ENCODE measurements at regions of chr15 and their contacts with region 1.

Region 1: DNA sequence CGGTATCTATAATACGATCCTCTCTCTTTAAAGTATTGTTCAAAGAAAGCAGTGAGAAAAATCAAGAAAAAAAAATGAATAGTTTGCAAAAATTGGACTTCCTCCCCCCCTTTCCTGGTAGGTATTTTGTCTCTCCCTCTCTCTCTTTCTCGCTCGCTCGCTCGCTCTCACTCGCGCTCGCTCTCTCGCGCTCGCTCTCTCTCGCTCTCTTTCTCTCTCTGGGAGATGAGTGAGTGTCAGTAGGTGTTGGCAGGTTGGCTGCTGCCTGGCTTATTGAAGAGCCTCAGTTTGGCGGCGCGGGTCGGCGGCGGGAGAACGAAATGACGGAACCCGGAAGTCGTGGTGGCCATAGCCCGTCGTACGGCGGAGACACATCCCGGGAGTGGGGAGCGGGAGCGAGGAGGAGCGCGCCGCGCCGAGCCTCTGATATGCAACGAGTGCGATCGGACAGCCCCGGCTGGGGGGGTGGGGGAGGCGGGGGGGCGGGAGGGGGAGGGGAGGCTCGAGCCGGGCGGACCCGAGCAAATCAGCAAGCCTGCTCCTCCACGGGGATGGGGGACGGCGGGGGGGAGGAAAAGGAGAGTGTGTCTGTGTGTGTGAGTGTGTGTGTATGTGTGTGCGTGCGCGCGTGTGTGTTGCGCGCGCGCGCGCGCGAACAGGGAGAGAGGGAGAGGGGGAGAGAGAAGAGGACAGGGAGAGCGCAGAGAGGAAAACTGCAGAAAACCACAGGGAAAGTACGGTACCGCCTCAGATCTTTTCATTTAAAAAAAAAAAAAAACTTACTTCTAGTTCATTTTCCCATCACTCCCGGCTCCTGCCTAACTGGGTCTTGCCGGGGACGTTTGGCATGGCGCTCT is at the start of gene MEIS2:
- DNase-seq: peak; percentile 83 to 95
- H3K4me3 ChIP-seq: peak within 1 kb of the TSS; percentile 80
- H3K4me1 ChIP-seq: peaks cover 12% of the 10 kb centered on the region
- H3K27me3 ChIP-seq: no peaks in the 10 kb centered on the region

Region 2: DNA sequence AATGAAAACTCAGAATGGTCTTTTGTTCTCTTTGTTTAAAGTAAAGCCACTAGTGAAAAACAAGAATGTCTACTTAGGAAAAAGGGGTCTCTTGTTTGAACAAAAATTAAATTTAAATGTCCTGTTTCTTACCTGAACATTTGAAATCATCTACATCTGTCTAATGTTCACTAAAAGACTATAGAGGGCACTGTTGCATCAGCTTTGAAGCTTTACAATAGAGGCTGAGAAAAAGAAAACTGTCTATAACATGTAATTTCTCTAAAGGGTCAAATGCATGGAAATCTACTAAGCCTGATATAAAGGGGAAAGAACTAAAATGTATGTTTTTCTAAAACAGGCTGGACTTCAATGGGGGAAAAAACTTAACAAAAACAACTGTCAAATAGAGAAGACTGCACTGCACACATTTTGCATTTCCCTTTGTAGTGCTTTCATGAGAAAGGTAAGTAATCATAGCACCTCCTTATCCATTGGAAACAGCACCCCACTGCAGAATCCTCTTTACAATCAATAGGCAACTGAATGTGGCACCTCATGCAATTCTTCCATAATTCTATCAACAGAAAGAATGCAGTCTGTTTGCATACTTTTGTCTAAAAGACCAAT is 1580.7 kb before region 1 on chr15:
- in situ Hi-C with region 1: loop called (anchors 25 kb)
- DNase-seq: peak; percentile 11 to 82
- H3K4me3 ChIP-seq: no peak overlapping the region
- H3K4me1 ChIP-seq: peaks cover 35% of the 10 kb centered on the region
- H3K27me3 ChIP-seq: no peaks in the 10 kb centered on the region

Region 3: DNA sequence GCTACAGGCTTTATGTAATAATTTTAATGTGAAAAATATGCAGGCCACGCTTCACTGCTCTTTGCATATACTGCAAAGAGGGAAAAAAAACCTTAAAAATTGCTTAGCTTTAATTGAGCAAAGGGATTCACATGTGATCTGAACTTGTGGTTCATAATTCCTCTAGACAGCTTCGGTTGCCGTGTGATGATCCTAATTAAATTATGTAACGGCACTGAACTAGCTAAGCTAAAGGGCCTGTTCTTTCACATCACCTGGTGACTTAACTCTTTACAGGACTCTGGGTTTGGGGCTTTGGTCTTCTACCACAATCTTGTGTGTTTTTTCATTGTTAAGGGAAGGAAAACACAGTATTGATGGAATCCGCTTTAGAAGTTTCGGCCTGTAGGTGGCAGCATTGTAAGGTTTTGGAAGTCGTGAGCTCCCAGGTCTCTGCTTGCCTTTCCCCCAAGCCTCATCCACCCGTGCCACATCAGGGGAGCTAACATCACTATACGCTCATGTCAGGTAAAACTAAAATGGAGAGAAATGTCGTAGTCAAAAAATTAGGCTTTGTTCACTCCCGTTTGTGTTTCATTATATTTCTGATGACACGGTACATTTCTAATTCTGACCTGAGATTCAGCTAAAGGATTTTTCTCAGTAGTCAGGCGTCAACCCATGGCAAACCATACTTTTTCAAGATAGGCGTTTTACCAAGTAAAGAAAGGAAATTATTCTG is 1348.8 kb before region 1 on chr15:
- in situ Hi-C with region 1: loop called (anchors 25 kb)
- DNase-seq: peak; percentile 87 to 90
- H3K4me3 ChIP-seq: no peak overlapping the region
- H3K4me1 ChIP-seq: peaks cover 16% of the 10 kb centered on the region
- H3K27me3 ChIP-seq: no peaks in the 10 kb centered on the region

Region 4: GRCh38 chr15:36501063-36501678 is 599.2 kb before region 1 on chr15:
- in situ Hi-C with region 1: loop called (anchors 25 kb)
- DNase-seq: peak; percentile 68 to 94
- H3K4me3 ChIP-seq: no peak overlapping the region
- H3K4me1 ChIP-seq: peaks cover 46% of the 10 kb centered on the region
- H3K27me3 ChIP-seq: no peaks in the 10 kb centered on the region

Region 5: GRCh38 chr15:36883713-36884517 is 216.4 kb before region 1 on chr15:
- in situ Hi-C with region 1: loop called (anchors 10 kb)
- DNase-seq: peak; percentile 82 to 96
- H3K4me3 ChIP-seq: 0 out of 2 replicates have a peak overlapping the region, but pooled peaks have one; percentile 1
- H3K4me1 ChIP-seq: peaks cover 17% of the 10 kb centered on the region
- H3K27me3 ChIP-seq: peaks cover 2% of the 10 kb centered on the region; the same call in 1 of the 2 replicates

Region 6: GRCh38 chr15:37446921-37447320 is 346.6 kb after region 1 on chr15:
- in situ Hi-C with region 1: no loop called
- DNase-seq: no peak
- H3K4me3 ChIP-seq: no peak overlapping the region
- H3K4me1 ChIP-seq: no peaks in the 10 kb centered on the region
- H3K27me3 ChIP-seq: no peaks in the 10 kb centered on the region

Region 7: DNA sequence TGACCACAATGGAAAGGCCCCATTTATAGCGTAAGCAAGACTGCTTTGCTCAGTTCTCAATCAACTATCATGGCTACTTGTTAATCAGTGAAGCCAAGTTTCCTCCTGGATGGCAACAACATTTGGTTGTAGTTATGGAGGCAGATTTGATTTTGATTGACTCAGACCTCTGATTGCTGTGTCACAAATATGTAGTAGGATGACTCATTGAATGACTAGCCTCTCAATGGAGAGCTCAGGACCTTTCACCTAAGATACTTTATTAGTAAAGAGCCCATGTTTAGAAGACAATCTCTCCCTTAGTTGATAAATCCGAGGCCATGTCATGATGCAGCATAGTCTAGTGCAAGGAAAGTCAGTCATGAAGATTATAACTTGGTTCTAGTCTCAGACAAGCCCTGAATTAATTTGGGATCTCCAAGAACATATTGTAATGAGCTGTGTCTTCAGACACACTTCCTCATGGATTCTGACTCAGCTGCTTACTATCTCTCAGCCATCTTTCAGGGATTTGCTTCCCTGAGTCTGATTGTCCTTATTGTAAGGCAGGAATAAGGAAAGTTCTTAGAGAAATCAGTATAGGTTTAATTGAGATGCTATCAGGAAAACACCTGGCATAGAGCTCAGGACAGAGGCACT is 436.7 kb after region 1 on chr15:
- in situ Hi-C with region 1: no loop called
- DNase-seq: no peak
- H3K4me3 ChIP-seq: no peak overlapping the region
- H3K4me1 ChIP-seq: no peaks in the 10 kb centered on the region
- H3K27me3 ChIP-seq: no peaks in the 10 kb centered on the region

Measured in HAP-1 (cell line).